Activated CD8-positive, alpha-beta memory T cell treated with anti-CD3 and anti-CD28 coated beads, Interleukin-2, amount 10 ng/mL, durations not matched to agents 7 days and 5 days (primary cell): ENCODE measurements at regions of chr9 and their contacts with region 1.

Region 1: DNA sequence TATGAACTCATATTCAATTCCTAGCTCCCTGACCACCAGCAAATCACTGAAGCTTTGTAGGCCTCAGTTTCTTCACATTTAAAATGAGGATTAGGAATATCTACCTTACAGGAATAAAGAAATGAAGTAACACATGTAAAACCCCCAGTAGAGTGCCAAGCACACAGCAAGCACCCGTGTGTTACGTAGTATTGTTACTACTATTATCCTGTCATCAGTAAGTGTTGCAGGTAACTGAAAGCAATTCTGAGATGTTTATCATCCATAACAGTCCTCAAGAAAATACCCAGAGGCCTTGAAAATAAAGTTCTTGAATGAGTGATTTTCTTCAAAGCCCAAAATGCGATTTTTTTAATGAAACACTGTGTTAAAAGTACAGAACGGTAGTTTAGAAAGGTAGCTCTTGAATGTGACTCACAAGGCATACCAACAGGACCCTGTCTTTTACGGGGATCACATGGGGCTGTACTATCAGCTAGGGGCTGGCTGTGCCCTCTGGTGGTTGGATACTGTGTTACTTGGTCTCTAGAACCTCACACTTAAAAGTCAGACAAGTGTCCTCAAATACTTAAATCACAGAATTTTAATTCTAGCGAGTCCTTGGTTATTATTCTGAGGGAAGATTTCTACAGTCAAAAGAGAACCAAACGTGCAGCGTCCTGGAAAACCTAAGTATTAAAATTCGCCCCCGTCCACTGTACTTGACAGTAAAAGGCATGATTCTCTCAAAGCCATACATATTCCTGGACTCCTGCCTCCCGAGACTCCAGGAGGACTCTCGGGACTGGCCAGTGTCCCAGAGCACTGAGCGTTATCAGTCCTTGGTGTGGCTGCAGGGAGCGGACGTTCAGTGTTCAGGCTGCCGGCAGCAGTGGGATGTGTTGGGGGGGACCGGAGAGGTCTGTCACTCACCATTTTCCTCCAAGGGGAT is 725 bp downstream of the NDUFB6 start:
- DNase-seq: peak; percentile 89
- ATAC-seq: peak; percentile 85
- H3K4me3 Mint-ChIP-seq: peak overlapping the region; percentile 97
- H3K27ac Mint-ChIP-seq: peak overlapping the region; percentile 98
- H3K4me1 Mint-ChIP-seq: peaks cover 27% of the 10 kb centered on the region
- H3K27me3 Mint-ChIP-seq: no peaks in the 10 kb centered on the region

Region 2: GRCh38 chr9:32399108-32399815 is 173.0 kb before region 1 on chr9:
- CTCF ChIA-PET with region 1: no interaction called
- DNase-seq: no peak
- ATAC-seq: no peak
- H3K4me3 Mint-ChIP-seq: no peak overlapping the region
- H3K27ac Mint-ChIP-seq: no peak overlapping the region
- H3K4me1 Mint-ChIP-seq: peaks cover 3% of the 10 kb centered on the region
- H3K27me3 Mint-ChIP-seq: no peaks in the 10 kb centered on the region

Region 3: GRCh38 chr9:32456564-32456963 is 115.7 kb before region 1 on chr9:
- CTCF ChIA-PET with region 1: no interaction called
- DNase-seq: no peak
- ATAC-seq: no peak
- H3K4me3 Mint-ChIP-seq: no peak overlapping the region
- H3K27ac Mint-ChIP-seq: no peak overlapping the region
- H3K4me1 Mint-ChIP-seq: no peaks in the 10 kb centered on the region
- H3K27me3 Mint-ChIP-seq: no peaks in the 10 kb centered on the region

Region 4: GRCh38 chr9:32526041-32526706 is 46.1 kb before region 1 on chr9 and contains the start of gene RIGI:
- CTCF ChIA-PET with region 1: interaction called, 18 read pairs
- DNase-seq: peak; percentile 90
- ATAC-seq: peak; percentile 80
- H3K4me3 Mint-ChIP-seq: peak within 1 kb of the TSS; percentile 88
- H3K27ac Mint-ChIP-seq: peak within 1 kb of the TSS; percentile 96
- H3K4me1 Mint-ChIP-seq: peaks cover 55% of the 10 kb centered on the region
- H3K27me3 Mint-ChIP-seq: no peaks in the 10 kb centered on the region
- total RNA-seq, gene RIGI: 27.1 to 40.0 TPM